Right cardiac atrium (tissue), 5 donors: ENCODE measurements at regions of chr11 and their contacts with region 1.

Region 1: GRCh38 chr11:2196970-2197770 is 25.6 kb upstream of the TH start:
- DNase-seq: peak; percentile 76 to 90 (median 90)
- ATAC-seq: peak; percentile 74 to 82
- H3K4me3 ChIP-seq: no peak overlapping the region
- H3K27ac ChIP-seq: no peak overlapping the region
- H3K4me1 ChIP-seq: no peaks in the 10 kb centered on the region
- H3K27me3 ChIP-seq: no peaks in the 10 kb centered on the region

Region 2: DNA sequence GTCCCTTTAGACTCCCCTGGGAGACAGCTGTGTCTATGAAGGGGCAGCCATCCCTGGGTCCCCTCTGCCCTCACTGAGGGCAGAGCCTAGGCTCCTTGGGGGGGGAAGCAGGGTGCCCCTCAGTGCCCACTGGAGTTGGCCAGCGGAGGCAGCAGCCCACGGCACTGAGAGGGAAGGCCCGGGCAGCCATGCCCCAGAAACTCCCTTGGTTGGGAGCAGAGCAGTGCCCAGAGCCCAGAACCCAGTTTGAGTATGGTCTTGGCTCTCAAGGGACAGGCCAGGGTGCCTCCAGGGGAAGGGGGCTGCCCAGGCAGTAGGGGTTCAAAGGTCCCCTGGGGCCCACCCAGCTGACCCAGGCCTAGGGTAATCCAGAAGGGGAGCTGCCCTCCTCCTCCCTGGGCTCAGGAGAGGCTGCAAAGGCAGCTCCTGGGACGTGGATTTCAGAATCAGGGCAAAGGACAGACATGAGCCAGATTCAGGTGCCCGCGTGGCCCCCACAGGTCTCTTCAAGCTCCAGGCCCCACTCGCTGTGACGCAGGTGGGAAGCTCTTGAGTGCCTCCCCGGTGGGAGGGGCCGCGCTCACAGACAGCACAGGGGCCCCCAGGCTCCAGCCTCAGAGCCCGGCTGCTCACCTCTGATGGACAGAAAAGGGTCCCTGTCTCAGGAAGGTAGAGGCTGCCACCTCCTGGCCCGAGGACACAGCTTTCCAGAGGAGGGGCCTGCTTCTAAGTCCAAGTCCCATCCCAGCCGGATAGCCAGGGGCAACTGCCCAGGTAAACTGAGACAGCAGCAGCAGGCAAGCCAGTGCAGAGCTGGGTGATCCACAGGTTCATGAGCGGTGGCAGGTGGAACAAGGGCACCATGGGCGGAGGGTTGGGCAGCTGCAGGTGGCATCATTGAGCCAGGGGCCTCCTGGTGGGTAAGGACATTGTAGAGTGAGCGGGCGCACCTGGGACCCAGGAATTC is 101.9 kb after region 1 on chr11:
- intact Hi-C with region 1: loop called (anchors 5 kb)
- DNase-seq: no peak
- ATAC-seq: no peak
- H3K4me3 ChIP-seq: no peak overlapping the region
- H3K27ac ChIP-seq: no peak overlapping the region
- H3K4me1 ChIP-seq: no peaks in the 10 kb centered on the region
- H3K27me3 ChIP-seq: no peaks in the 10 kb centered on the region

Region 3: GRCh38 chr11:2409611-2410468 is 212.7 kb after region 1 on chr11:
- intact Hi-C with region 1: no loop called
- DNase-seq: no peak
- ATAC-seq: no peak
- H3K4me3 ChIP-seq: no peak overlapping the region
- H3K27ac ChIP-seq: no peak overlapping the region
- H3K4me1 ChIP-seq: no peaks in the 10 kb centered on the region
- H3K27me3 ChIP-seq: no peaks in the 10 kb centered on the region

Region 4: GRCh38 chr11:2420502-2421225 is 223.5 kb after region 1 on chr11:
- intact Hi-C with region 1: loop called (anchors 2 to 5 kb)
- DNase-seq: peak; percentile 70 to 91 (median 90)
- ATAC-seq: peak; percentile 94
- H3K4me3 ChIP-seq: no peak overlapping the region
- H3K27ac ChIP-seq: no peak overlapping the region
- H3K4me1 ChIP-seq: no peaks in the 10 kb centered on the region
- H3K27me3 ChIP-seq: no peaks in the 10 kb centered on the region

Region 5: GRCh38 chr11:2526808-2527381 is 329.7 kb after region 1 on chr11:
- intact Hi-C with region 1: loop called in 2 of 4 experiments (anchors 10 kb)
- DNase-seq: peak; percentile 51 to 83 (median 82)
- ATAC-seq: peak in 1 of 2 donors; percentile 25
- H3K4me3 ChIP-seq: no peak overlapping the region
- H3K27ac ChIP-seq: no peak overlapping the region
- H3K4me1 ChIP-seq: no peaks in the 10 kb centered on the region
- H3K27me3 ChIP-seq: no peaks in the 10 kb centered on the region

Region 6: GRCh38 chr11:2532704-2533586 is 335.8 kb after region 1 on chr11:
- intact Hi-C with region 1: loop called in 2 of 4 experiments (anchors 10 kb)
- DNase-seq: peak; percentile 89 to 96 (median 95)
- ATAC-seq: peak; percentile 83 to 88
- H3K4me3 ChIP-seq: peak overlapping the region; percentile 3
- H3K27ac ChIP-seq: no peak overlapping the region
- H3K4me1 ChIP-seq: peaks cover 3% of the 10 kb centered on the region
- H3K27me3 ChIP-seq: no peaks in the 10 kb centered on the region

Region 7: DNA sequence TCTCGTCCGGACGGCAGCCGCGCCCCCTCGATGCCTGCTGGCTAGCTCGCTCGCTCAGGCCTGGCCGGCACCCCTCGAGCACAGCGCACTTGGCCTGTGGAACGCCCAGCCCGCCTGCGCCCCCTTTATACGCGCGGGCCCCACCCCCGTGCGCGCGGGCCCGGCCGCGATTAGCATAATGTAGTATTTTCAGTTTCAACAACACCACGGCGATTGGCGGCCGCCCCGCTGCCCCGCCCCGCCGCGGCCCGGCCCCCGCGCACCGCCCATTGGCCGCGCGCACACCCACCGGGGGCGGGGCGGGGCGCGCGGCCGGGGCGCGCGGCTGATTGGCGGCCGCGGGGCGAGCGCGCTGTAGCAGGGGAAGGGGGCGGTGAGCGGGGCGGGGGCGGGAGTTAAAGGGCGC is 688.5 kb after region 1 on chr11 and contains the start of gene CDKN1C:
- intact Hi-C with region 1: loop called in 1 of 4 experiments (anchors 10 kb)
- DNase-seq: peak; percentile 88 to 97 (median 96)
- ATAC-seq: peak; percentile 80 to 82
- H3K4me3 ChIP-seq: peak within 1 kb of the TSS; percentile 88
- H3K27ac ChIP-seq: peak within 1 kb of the TSS; percentile 62
- H3K4me1 ChIP-seq: peaks cover under 1% of the 10 kb centered on the region
- H3K27me3 ChIP-seq: no peaks in the 10 kb centered on the region
- total RNA-seq, gene CDKN1C: 16.1 to 26.3 (median 21.4) TPM